Ascending aorta (tissue), 2 donors: ENCODE measurements at regions of chr6 and their contacts with region 1.

Region 1: GRCh38 chr6:170554013-170554795 is at the start of gene TBP:
- DNase-seq: peak; percentile 95 to 99
- H3K4me3 ChIP-seq: peak within 1 kb of the TSS; percentile 75 to 98
- H3K27ac ChIP-seq: peak within 1 kb of the TSS; percentile 94
- H3K4me1 ChIP-seq: peaks cover 8 to 29% of the 10 kb centered on the region in 2 donors
- H3K27me3 ChIP-seq: no peaks in the 10 kb centered on the region
- CTCF ChIP-seq: no peak
- total RNA-seq, gene TBP: 10.2 TPM

Region 2: GRCh38 chr6:169701954-169702839 is 852.0 kb before region 1 on chr6 and contains the starts of genes C6orf120 and WDR27:
- intact Hi-C with region 1: loop called (anchors 1 kb)
- DNase-seq: peak; percentile 91 to 98
- H3K4me3 ChIP-seq: peak within 1 kb of the TSS; percentile 70 to 83
- H3K27ac ChIP-seq: peak within 1 kb of the TSS; percentile 91 to 99
- H3K4me1 ChIP-seq: peaks cover 0 to 16% of the 10 kb centered on the region in 2 donors
- H3K27me3 ChIP-seq: no peaks in the 10 kb centered on the region
- CTCF ChIP-seq: no peak
- total RNA-seq, gene C6orf120: 36.2 TPM
- total RNA-seq, gene WDR27: 92.7 TPM

Region 3: GRCh38 chr6:169751242-169752073 is 802.7 kb before region 1 on chr6 and contains the starts of genes DYNLT2 and ERMARD:
- intact Hi-C with region 1: loop called (anchors 1 kb)
- DNase-seq: peak; percentile 78 to 96
- H3K4me3 ChIP-seq: peak within 1 kb of the TSS; percentile 91
- H3K27ac ChIP-seq: peak within 1 kb of the TSS; percentile 97 to 98
- H3K4me1 ChIP-seq: peaks cover 2 to 13% of the 10 kb centered on the region in 2 donors
- H3K27me3 ChIP-seq: no peaks in the 10 kb centered on the region
- CTCF ChIP-seq: peak; percentile 3 to 27 (median 3)
- total RNA-seq, gene DYNLT2: 0.21 TPM
- total RNA-seq, gene ERMARD: 4.0 TPM

Region 4: GRCh38 chr6:170306324-170307079 is 247.7 kb before region 1 on chr6 and contains the start of gene FAM120B:
- intact Hi-C with region 1: loop called (anchors 1 kb)
- DNase-seq: peak; percentile 87 to 98
- H3K4me3 ChIP-seq: peak within 1 kb of the TSS; percentile 87 to 90
- H3K27ac ChIP-seq: peak within 1 kb of the TSS; percentile 85 to 86
- H3K4me1 ChIP-seq: peaks cover 0 to 19% of the 10 kb centered on the region in 2 donors
- H3K27me3 ChIP-seq: no peaks in the 10 kb centered on the region
- CTCF ChIP-seq: no peak
- total RNA-seq, gene FAM120B: 9.9 TPM

Region 5: DNA sequence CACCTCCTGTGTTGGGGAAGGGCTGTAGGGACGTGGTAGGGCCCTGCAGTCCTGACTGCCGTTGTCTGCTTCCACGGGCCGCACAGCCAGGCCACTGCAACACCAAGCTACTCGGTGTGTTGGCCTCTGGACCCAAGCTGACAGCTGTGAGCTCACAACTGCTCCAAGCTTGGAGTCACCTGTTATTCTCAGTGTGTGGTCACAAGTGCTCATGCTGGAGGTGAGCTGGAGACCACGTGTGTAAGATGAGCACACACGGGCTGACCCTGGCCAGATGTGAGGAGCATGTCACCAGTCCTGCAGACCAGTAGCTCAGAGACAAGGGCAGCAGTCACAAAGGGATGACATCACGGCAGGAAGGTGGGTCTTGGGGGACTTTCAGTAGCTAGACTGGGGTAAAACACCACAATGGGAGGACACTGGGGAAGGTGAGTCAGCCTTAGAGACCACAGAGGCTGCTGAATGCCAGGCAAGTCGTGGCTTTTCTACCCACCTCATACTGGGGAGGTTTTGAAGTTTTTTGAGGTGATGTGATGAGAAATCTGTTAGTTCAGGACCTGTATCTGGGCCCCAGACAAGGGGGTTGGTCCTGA is 160.3 kb before region 1 on chr6:
- intact Hi-C with region 1: no loop called
- DNase-seq: no peak
- H3K4me3 ChIP-seq: no peak overlapping the region
- H3K27ac ChIP-seq: no peak overlapping the region
- H3K4me1 ChIP-seq: no peaks in the 10 kb centered on the region
- H3K27me3 ChIP-seq: no peaks in the 10 kb centered on the region
- CTCF ChIP-seq: no peak

Region 6: DNA sequence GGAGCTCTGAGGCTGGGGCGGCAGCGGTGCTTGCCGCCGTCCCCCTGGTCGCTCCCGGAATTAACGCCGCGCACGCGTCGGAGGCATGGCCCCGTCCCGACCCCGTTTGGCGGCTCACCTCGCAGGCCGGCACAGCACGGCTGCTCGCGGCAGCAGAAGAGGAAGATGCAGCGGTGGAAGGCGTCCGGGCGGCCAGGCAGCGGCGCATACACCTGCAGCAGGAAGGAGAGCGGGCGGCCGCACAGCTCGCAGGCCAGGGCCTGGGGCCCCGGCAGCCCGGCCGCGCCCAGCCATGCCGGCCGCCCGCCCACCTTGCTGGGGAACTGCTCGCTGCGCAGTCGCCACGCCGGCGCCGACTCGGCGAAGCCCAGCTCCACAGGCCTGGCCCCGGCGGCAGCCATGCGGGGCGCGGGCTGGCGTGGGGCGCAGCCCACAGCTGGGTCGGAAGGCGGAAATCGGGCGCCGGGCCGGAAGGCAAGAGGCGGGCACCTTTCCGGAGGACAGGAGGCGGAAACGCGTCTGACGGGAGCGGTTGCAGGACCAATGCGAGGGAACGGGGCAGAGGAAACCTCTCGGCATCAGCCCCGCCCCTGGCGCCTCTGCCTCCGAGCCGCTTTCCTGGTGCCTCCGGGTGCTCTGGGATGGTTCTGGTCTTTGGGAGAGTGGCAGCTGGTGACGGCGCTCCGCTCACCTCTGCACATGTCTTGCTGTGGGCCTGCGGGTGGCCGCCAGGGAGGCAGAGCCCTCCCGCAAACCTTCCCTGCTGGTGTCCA is 30.2 kb after region 1 on chr6 and contains the start of gene PDCD2:
- intact Hi-C with region 1: loop called (anchors 1 kb)
- DNase-seq: peak; percentile 57 to 95
- H3K4me3 ChIP-seq: peak within 1 kb of the TSS; percentile 98 to 100
- H3K27ac ChIP-seq: peak within 1 kb of the TSS; percentile 88 to 96
- H3K4me1 ChIP-seq: peaks cover 0 to 3% of the 10 kb centered on the region in 2 donors
- H3K27me3 ChIP-seq: no peaks in the 10 kb centered on the region
- CTCF ChIP-seq: no peak
- total RNA-seq, gene PDCD2: 263 TPM